Astrocyte of the cerebellum (primary cell): ENCODE measurements at regions of chr9 and their contacts with region 1.

Region 1: GRCh38 chr9:81558091-81558830 is 131.1 kb downstream of the TLE1 start:
- DNase-seq: peak; percentile 85
- H3K4me3 ChIP-seq: no peak overlapping the region
- CTCF ChIP-seq: no peak

Region 2: GRCh38 chr9:81479573-81479972 is 78.7 kb before region 1 on chr9:
- in situ Hi-C with region 1: no loop called
- DNase-seq: no peak
- H3K4me3 ChIP-seq: no peak overlapping the region
- CTCF ChIP-seq: no peak

Region 3: GRCh38 chr9:81490605-81491331 is 67.5 kb before region 1 on chr9:
- in situ Hi-C with region 1: no loop called
- DNase-seq: peak; percentile 95
- H3K4me3 ChIP-seq: no peak overlapping the region
- CTCF ChIP-seq: no peak

Region 4: DNA sequence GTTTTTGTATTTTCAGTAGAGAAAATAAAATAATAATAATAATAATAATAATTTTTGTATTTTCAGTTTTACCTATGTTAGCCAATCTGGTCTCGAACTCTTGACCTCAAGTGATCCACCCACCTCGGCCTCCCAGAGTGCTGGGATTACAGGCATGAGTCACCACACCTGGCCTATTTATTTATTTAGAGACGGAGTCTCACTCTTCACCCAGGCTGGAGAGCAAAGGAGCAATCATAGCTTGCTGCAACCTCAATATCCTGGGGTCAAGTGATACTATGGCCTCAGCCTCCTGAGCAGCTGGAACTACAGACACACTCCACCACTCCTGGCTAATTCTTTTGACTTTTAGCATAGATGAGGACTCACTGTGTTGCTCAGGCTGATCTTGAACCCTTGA is 36.4 kb before region 1 on chr9:
- in situ Hi-C with region 1: loop called (anchors 5 kb)
- DNase-seq: no peak
- H3K4me3 ChIP-seq: no peak overlapping the region
- CTCF ChIP-seq: no peak

Region 5: DNA sequence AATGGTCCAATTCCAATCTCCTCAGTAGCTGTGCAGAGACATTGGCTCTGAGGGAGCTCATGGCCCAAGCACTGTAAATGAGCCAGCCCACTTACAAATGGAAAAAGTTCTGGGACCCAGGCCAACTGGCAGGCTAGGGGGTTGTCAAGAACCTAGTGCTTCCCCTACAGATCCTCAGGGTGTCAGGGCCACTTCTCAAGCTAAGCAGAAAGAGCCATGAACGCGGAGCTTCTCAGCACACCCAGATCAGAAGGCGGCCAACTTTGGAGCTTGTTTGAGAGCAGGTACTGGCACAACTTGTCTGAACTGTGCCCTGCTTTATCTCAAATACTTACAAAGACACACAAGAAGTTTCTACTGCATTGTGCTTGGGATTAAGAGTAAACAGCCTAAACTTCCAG is 113.6 kb after region 1 on chr9:
- in situ Hi-C with region 1: loop called (anchors 10 kb)
- DNase-seq: peak; percentile 94
- H3K4me3 ChIP-seq: no peak overlapping the region
- CTCF ChIP-seq: no peak